CD14-positive monocyte (primary cell): ENCODE measurements at regions of chr14 and their contacts with region 1.

Region 1: GRCh38 chr14:23320774-23321571 is at the start of gene PABPN1:
- DNase-seq: peak; percentile 100
- H3K4me3 ChIP-seq: peak within 1 kb of the TSS; percentile 74 to 92 (median 92)
- H3K4me3 Mint-ChIP-seq: peak within 1 kb of the TSS; percentile 90 to 92
- H3K27ac ChIP-seq: peak within 1 kb of the TSS; percentile 96 to 99
- H3K27ac Mint-ChIP-seq: peak within 1 kb of the TSS; percentile 98 to 100 (median 99)
- H3K4me1 ChIP-seq: peaks cover 23 to 24% of the 10 kb centered on the region in 2 donors
- H3K4me1 Mint-ChIP-seq: peaks cover 25% of the 10 kb centered on the region
- H3K27me3 ChIP-seq: no peaks in the 10 kb centered on the region
- H3K27me3 Mint-ChIP-seq: peaks cover 0 to 2% (median 0%) of the 10 kb centered on the region in 3 donors
- CTCF ChIP-seq: no peak
- polyA plus RNA-seq, gene PABPN1: 54.4 to 356 (median 64.6) TPM

Region 2: GRCh38 chr14:23095196-23096108 is 225.5 kb before region 1 on chr14 and contains the start of gene C14orf119:
- intact Hi-C with region 1: loop called in 1 of 2 experiments (anchors 5 kb)
- DNase-seq: peak; percentile 100
- H3K4me3 ChIP-seq: peak within 1 kb of the TSS; percentile 80 to 98 (median 88)
- H3K4me3 Mint-ChIP-seq: no peak within 1 kb of the TSS
- H3K27ac ChIP-seq: peak within 1 kb of the TSS; percentile 95 to 96
- H3K27ac Mint-ChIP-seq: no peak within 1 kb of the TSS
- H3K4me1 ChIP-seq: peaks cover 21 to 35% of the 10 kb centered on the region in 2 donors
- H3K4me1 Mint-ChIP-seq: peaks cover 21% of the 10 kb centered on the region
- H3K27me3 ChIP-seq: no peaks in the 10 kb centered on the region
- H3K27me3 Mint-ChIP-seq: no peaks in the 10 kb centered on the region
- CTCF ChIP-seq: no peak
- polyA plus RNA-seq, gene C14orf119: 17.5 to 110 (median 106) TPM

Region 3: DNA sequence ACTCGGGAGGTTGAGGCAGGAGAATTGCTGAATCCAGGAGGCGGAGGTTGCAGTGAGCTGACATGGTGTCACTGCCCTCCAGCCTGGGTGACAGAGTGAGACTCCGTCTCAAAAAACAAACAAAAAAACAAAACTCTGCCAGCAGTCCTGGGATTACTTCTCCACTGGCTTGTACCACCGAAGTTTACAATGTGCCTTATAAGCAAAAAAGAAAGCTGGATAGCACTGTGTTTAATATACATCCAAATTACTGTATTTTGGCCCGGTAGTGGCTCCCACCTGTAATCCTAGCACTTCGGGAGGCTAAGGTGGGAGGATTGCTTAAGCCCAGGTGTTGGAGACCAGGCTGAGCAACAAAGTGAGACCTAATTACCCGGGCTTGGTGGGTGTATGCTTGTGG is 51.8 kb before region 1 on chr14:
- intact Hi-C with region 1: no loop called
- DNase-seq: no peak
- H3K4me3 ChIP-seq: no peak overlapping the region
- H3K4me3 Mint-ChIP-seq: no peak overlapping the region
- H3K27ac ChIP-seq: no peak overlapping the region
- H3K27ac Mint-ChIP-seq: no peak overlapping the region
- H3K4me1 ChIP-seq: no peaks in the 10 kb centered on the region
- H3K4me1 Mint-ChIP-seq: no peaks in the 10 kb centered on the region
- H3K27me3 ChIP-seq: peaks cover 0 to 2% of the 10 kb centered on the region in 2 donors
- H3K27me3 Mint-ChIP-seq: peaks cover 0 to 8% (median 6%) of the 10 kb centered on the region in 3 donors
- CTCF ChIP-seq: no peak

Region 4: DNA sequence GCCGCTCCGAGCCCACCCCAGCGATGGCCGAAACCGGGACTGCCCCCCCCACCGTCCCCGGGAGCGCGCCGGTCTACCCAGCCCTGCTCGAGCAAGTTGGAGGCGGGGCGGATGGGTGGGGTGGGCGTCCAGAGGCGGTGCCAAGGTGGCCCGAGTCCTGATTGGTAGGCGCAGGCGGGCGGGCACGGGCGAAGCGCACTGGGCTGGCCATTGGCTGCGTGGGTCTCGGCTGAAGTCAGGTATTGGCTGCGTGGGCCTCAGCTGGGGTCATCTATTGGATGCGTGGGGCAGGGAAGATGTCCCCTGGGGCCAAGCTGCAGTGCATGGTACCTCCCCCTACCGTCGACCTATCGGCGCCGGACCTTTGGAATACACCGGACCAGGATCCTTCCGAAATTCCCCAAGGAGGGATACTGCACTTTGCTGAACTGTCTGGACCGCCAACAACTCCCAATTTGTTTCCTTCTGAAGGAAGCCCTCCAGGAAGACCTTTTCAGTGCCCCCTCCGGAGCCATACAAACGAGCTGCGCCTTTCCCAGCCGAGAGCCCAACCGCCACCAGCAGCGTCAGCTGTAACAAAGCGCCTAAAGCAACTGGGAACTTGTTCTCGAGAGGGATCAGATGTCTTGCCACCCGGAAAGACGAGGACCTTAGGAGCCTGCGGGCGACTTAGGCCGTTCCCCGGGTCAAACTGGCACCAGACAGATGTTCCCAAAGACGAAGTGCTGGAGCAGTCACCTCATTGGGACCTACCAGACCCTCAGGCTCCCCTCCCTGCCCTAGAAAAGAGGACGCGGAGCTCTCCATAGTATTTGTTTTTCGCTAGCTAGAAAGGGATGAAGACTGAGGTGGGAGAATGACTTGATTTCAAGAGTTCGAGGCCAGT is 34.7 kb before region 1 on chr14 and contains the start of gene HOMEZ:
- intact Hi-C with region 1: loop called (anchors 1 to 5 kb)
- DNase-seq: peak; percentile 95 to 96 (median 95)
- H3K4me3 ChIP-seq: peak within 1 kb of the TSS; percentile 70 to 94 (median 89)
- H3K4me3 Mint-ChIP-seq: peak within 1 kb of the TSS; percentile 98 to 99
- H3K27ac ChIP-seq: peak within 1 kb of the TSS; percentile 91 to 95
- H3K27ac Mint-ChIP-seq: peak within 1 kb of the TSS; percentile 94 to 99 (median 97)
- H3K4me1 ChIP-seq: peaks cover 18 to 25% of the 10 kb centered on the region in 2 donors
- H3K4me1 Mint-ChIP-seq: peaks cover 24% of the 10 kb centered on the region
- H3K27me3 ChIP-seq: no peaks in the 10 kb centered on the region
- H3K27me3 Mint-ChIP-seq: peaks cover 0 to 2% (median 0%) of the 10 kb centered on the region in 3 donors
- CTCF ChIP-seq: no peak
- polyA plus RNA-seq, gene HOMEZ: 3.5 to 5.4 (median 4.1) TPM

Region 5: GRCh38 chr14:23301288-23301968 is 19.5 kb before region 1 on chr14:
- intact Hi-C with region 1: loop called (anchors 1 to 2 kb)
- DNase-seq: peak; percentile 98 to 99 (median 98)
- H3K4me3 ChIP-seq: peak overlapping the region; percentile 64 to 97 (median 90)
- H3K4me3 Mint-ChIP-seq: peak overlapping the region; percentile 87 to 96
- H3K27ac ChIP-seq: peak overlapping the region; percentile 93 to 96
- H3K27ac Mint-ChIP-seq: peak overlapping the region; percentile 97 to 99 (median 98)
- H3K4me1 ChIP-seq: peaks cover 32 to 50% of the 10 kb centered on the region in 2 donors
- H3K4me1 Mint-ChIP-seq: peaks cover 38% of the 10 kb centered on the region
- H3K27me3 ChIP-seq: no peaks in the 10 kb centered on the region
- H3K27me3 Mint-ChIP-seq: no peaks in the 10 kb centered on the region
- CTCF ChIP-seq: peak; percentile 68

Region 6: GRCh38 chr14:23306410-23307145 is 14.4 kb before region 1 on chr14 and contains the start of gene BCL2L2:
- intact Hi-C with region 1: loop called (anchors 1 to 2 kb)
- DNase-seq: peak; percentile 57 to 70 (median 65)
- H3K4me3 ChIP-seq: peak within 1 kb of the TSS; percentile 39 to 92 (median 90)
- H3K4me3 Mint-ChIP-seq: peak within 1 kb of the TSS; percentile 82 to 92
- H3K27ac ChIP-seq: peak within 1 kb of the TSS; percentile 76 to 89
- H3K27ac Mint-ChIP-seq: peak within 1 kb of the TSS; percentile 76 to 92 (median 89)
- H3K4me1 ChIP-seq: peaks cover 31 to 54% of the 10 kb centered on the region in 2 donors
- H3K4me1 Mint-ChIP-seq: peaks cover 49% of the 10 kb centered on the region
- H3K27me3 ChIP-seq: no peaks in the 10 kb centered on the region
- H3K27me3 Mint-ChIP-seq: no peaks in the 10 kb centered on the region
- CTCF ChIP-seq: no peak
- polyA plus RNA-seq, gene BCL2L2: 0.90 to 23.7 (median 1.4) TPM

Region 7: GRCh38 chr14:23352511-23353432 is 31.8 kb after region 1 on chr14 and contains the start of gene SLC22A17:
- intact Hi-C with region 1: no loop called
- DNase-seq: peak in 1 of 3 donors; percentile 4
- H3K4me3 ChIP-seq: peak within 1 kb of the TSS in 1 of 3 experiments; percentile 51
- H3K4me3 Mint-ChIP-seq: peak within 1 kb of the TSS; percentile 48 to 68
- H3K27ac ChIP-seq: no peak within 1 kb of the TSS
- H3K27ac Mint-ChIP-seq: no peak within 1 kb of the TSS
- H3K4me1 ChIP-seq: peaks cover 4 to 12% of the 10 kb centered on the region in 2 donors
- H3K4me1 Mint-ChIP-seq: peaks cover 9% of the 10 kb centered on the region
- H3K27me3 ChIP-seq: peaks cover 42 to 57% of the 10 kb centered on the region in 2 donors
- H3K27me3 Mint-ChIP-seq: peaks cover 51 to 65% (median 54%) of the 10 kb centered on the region in 3 donors
- CTCF ChIP-seq: no peak
- polyA plus RNA-seq, gene SLC22A17: not detected

Region 8: DNA sequence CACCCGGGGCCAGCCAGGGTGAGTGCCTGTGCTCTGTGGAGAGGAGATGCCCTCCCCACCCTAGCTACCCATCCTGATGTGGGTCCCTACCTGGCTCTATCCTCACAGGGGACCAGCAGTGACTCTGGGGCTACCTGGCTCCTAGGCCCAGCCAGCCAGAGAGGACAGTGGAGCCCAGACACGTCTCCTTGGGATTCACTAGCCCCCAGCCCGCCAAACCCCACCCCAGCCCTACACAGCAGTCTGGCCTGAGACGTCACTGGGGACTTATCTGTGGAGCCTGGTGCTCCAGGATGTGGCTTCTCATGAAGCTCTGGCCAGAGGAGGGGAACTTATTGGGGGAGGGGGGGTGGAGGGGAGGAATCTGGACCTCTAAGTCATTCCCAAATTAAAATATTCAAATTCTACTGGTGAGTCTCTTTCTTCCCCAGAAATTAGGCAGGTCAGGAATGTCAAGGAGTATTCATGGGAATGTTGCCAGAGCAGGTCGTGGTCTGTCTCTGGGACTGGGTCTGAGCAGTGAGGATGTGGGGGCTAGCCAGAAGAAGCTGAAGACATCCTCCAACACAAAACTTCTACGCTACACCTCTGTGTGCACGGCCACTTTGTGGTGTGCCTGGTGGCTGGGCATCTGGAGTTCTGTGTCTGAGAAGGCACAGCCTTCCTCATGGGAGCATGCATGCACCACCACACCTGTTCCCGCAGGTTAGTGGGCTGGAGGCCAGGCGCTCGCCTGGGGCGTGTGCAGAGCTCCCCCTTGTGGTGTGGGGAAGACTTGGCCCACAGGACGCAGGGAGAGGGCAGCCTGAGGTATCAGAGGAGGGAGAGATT is 58.6 kb after region 1 on chr14:
- intact Hi-C with region 1: no loop called
- DNase-seq: peak; percentile 27 to 41 (median 29)
- H3K4me3 ChIP-seq: no peak overlapping the region
- H3K4me3 Mint-ChIP-seq: no peak overlapping the region
- H3K27ac ChIP-seq: no peak overlapping the region
- H3K27ac Mint-ChIP-seq: no peak overlapping the region
- H3K4me1 ChIP-seq: no peaks in the 10 kb centered on the region
- H3K4me1 Mint-ChIP-seq: no peaks in the 10 kb centered on the region
- H3K27me3 ChIP-seq: no peaks in the 10 kb centered on the region
- H3K27me3 Mint-ChIP-seq: peaks cover 3 to 13% (median 10%) of the 10 kb centered on the region in 3 donors
- CTCF ChIP-seq: peak; percentile 95

Region 9: GRCh38 chr14:23469127-23469905 is 148.3 kb after region 1 on chr14 and contains the start of gene NGDN:
- intact Hi-C with region 1: loop called in 1 of 2 experiments (anchors 10 kb)
- DNase-seq: peak; percentile 98 to 100 (median 99)
- H3K4me3 ChIP-seq: peak within 1 kb of the TSS; percentile 71 to 82 (median 81)
- H3K4me3 Mint-ChIP-seq: no peak within 1 kb of the TSS
- H3K27ac ChIP-seq: peak within 1 kb of the TSS; percentile 83 to 92
- H3K27ac Mint-ChIP-seq: no peak within 1 kb of the TSS
- H3K4me1 ChIP-seq: peaks cover 7 to 13% of the 10 kb centered on the region in 2 donors
- H3K4me1 Mint-ChIP-seq: peaks cover 3% of the 10 kb centered on the region
- H3K27me3 ChIP-seq: no peaks in the 10 kb centered on the region
- H3K27me3 Mint-ChIP-seq: peaks cover 0 to 3% (median 1%) of the 10 kb centered on the region in 3 donors
- CTCF ChIP-seq: peak; percentile 78
- polyA plus RNA-seq, gene NGDN: 22.7 to 44.5 (median 26.8) TPM

Region 10: DNA sequence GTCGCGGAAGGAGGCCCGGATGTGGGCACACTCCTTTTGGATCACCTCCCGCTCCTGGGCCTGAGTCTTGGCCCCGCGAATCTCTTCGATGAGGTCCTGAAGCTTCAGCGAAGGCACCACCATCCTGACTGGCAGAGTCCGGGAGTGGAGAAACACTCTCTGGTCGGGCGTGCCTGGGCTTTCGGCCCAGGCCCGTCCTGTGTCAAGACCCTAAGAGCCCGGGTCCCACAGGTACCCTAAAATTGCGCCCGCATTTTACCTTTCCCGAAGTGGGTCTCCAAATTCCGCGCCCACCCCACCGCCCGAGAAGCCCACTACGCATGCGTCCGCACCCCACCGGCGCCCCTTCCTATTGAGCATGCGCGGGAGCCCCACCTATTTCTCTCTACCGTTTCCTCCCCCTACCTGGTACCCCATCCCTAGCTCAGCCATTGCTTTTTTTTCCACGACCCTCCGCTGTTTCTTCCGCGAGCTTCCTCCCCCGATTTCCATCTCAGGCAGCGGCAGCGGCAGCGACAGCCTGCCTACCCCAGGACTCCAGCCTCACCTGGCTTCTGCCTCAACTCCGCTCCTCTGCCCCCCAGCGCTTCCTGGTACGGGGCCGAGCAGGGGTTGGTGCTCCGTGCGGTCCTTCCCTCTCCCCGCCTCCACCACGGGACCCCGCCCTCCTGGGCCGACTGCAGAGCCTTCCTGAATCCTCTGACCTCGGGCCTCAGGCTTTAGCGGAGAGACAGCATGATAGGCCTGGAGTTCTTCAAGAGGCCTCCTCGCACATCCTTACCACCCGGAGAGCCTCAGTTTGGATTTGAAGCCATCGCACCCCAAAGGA is 246.4 kb after region 1 on chr14 and contains the start of gene AP1G2:
- intact Hi-C with region 1: loop called in 1 of 2 experiments (anchors 10 kb)
- DNase-seq: peak; percentile 60 to 73 (median 70)
- H3K4me3 ChIP-seq: peak within 1 kb of the TSS; percentile 51 to 94 (median 94)
- H3K4me3 Mint-ChIP-seq: peak within 1 kb of the TSS; percentile 100
- H3K27ac ChIP-seq: peak within 1 kb of the TSS; percentile 53 to 86
- H3K27ac Mint-ChIP-seq: peak within 1 kb of the TSS; percentile 91 to 95 (median 94)
- H3K4me1 ChIP-seq: peaks cover 57 to 73% of the 10 kb centered on the region in 2 donors
- H3K4me1 Mint-ChIP-seq: peaks cover 62% of the 10 kb centered on the region
- H3K27me3 ChIP-seq: no peaks in the 10 kb centered on the region
- H3K27me3 Mint-ChIP-seq: peaks cover 0 to 6% (median 0%) of the 10 kb centered on the region in 3 donors
- CTCF ChIP-seq: no peak
- polyA plus RNA-seq, gene AP1G2: 32.2 to 437 (median 37.0) TPM